Activated naive CD4-positive, alpha-beta T cell treated with anti-CD3 and anti-CD28 coated beads for 36 hours (primary cell): ENCODE measurements at regions of chr4 and their contacts with region 1.

Region 1: DNA sequence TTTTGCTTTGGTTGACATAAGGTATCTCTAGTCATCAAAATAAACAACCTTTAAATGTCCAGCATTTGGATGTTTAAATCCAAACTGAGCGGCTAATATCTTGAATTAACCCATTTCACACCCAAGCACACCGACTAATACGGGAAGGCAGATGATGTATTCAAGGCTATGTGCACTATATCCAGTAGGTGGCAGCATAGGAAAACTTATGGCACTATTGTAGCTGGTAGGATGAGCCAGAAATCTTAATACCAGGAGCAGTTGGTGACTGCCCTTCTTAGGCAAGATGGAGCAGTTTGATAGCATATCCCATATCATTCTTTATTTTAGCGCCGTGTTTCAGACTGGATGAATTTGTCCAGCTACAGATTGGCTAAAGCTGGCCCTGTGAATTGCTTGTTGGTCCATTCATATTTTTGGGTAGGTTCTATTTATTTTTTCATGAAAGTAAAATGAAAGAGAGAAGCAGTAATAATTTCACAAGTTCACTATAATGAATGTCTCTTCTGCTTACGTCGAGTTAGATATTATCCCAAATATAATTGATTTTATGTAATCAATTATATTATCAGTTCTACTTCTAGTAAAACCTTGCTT is 24.4 kb downstream of the UCHL1 start:
- DNase-seq: peak; percentile 42
- H3K4me3 Mint-ChIP-seq: no peak overlapping the region
- H3K27ac Mint-ChIP-seq: no peak overlapping the region
- H3K4me1 Mint-ChIP-seq: no peaks in the 10 kb centered on the region
- H3K27me3 Mint-ChIP-seq: peaks cover 4% of the 10 kb centered on the region

Region 2: GRCh38 chr4:41214136-41214824 is 66.9 kb before region 1 on chr4 and contains the start of gene APBB2:
- CTCF ChIA-PET with region 1: no interaction called
- intact Hi-C with region 1: no loop called
- DNase-seq: peak; percentile 66
- H3K4me3 Mint-ChIP-seq: peak within 1 kb of the TSS; percentile 79
- H3K27ac Mint-ChIP-seq: no peak within 1 kb of the TSS
- H3K4me1 Mint-ChIP-seq: peaks cover 22% of the 10 kb centered on the region
- H3K27me3 Mint-ChIP-seq: peaks cover 47% of the 10 kb centered on the region
- total RNA-seq, gene APBB2: 4.5 to 4.8 TPM

Region 3: GRCh38 chr4:41257257-41257901 is 23.8 kb before region 1 on chr4:
- CTCF ChIA-PET with region 1: interaction called, 18 read pairs
- intact Hi-C with region 1: no loop called
- DNase-seq: peak; percentile 29
- H3K4me3 Mint-ChIP-seq: peak overlapping the region; percentile 60
- H3K27ac Mint-ChIP-seq: no peak overlapping the region
- H3K4me1 Mint-ChIP-seq: peaks cover 8% of the 10 kb centered on the region
- H3K27me3 Mint-ChIP-seq: peaks cover 57% of the 10 kb centered on the region

Region 4: DNA sequence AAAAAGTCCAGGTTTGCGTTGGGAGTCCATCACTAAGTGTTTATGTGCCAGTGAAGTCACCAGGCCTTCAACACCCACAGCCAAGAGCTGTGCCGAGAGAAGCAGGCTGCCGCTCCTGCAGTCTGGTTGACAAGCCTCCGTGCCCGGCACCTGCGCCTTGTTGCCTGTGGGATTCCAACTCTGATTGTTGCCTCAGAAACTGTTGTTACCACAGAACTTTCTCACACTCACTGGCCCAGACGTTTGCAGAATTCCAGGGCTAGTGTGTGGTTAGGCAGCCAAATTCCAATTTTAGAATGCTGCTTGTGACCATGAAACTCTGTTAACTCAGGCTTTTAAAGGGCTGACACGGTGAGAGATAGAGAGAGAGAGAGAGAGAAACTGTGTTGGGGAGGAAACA is 137.3 kb after region 1 on chr4:
- CTCF ChIA-PET with region 1: no interaction called
- intact Hi-C with region 1: no loop called
- DNase-seq: no peak
- H3K4me3 Mint-ChIP-seq: no peak overlapping the region
- H3K27ac Mint-ChIP-seq: no peak overlapping the region
- H3K4me1 Mint-ChIP-seq: no peaks in the 10 kb centered on the region
- H3K27me3 Mint-ChIP-seq: no peaks in the 10 kb centered on the region

Region 5: GRCh38 chr4:41644288-41644914 is 363.3 kb after region 1 on chr4:
- CTCF ChIA-PET with region 1: interaction called, 3 read pairs
- intact Hi-C with region 1: loop called (anchors 5 kb)
- DNase-seq: peak; percentile 42
- H3K4me3 Mint-ChIP-seq: no peak overlapping the region
- H3K27ac Mint-ChIP-seq: no peak overlapping the region
- H3K4me1 Mint-ChIP-seq: no peaks in the 10 kb centered on the region
- H3K27me3 Mint-ChIP-seq: peaks cover 31% of the 10 kb centered on the region

Region 6: DNA sequence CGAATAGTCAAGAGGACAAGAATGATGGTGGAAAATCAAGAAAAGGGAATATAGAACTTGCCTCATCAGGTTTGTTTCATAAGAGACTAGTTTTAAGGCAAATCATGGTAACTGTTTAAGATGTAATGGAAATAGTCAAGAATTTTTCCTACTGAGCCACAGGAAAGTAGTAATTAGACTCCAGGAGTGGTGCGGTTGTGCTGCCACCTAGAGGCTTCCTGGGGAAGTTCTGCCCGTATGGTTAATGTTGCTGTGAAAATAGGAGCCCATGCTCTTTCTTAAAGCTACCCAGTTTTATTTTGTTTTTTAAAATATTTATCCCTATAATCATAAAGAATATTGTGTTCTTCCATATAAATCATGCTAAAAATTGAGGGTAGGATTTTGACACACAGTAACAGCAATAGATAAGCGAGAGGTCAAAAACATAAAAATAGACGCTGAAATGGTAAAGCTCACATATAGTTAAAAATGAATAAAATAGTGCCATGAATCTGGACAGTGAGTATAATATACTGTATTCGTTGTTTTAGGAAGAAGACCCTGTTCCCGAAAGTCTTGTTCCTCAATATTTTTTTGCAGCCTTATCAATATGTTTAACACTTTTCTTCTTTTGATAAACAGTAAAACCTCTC is 380.4 kb after region 1 on chr4:
- CTCF ChIA-PET with region 1: interaction called, 47 read pairs
- intact Hi-C with region 1: loop called (anchors 1 kb)
- DNase-seq: peak; percentile 66
- H3K4me3 Mint-ChIP-seq: no peak overlapping the region
- H3K27ac Mint-ChIP-seq: no peak overlapping the region
- H3K4me1 Mint-ChIP-seq: peaks cover 4% of the 10 kb centered on the region
- H3K27me3 Mint-ChIP-seq: peaks cover 2% of the 10 kb centered on the region

Region 7: GRCh38 chr4:41882625-41883347 is 601.6 kb after region 1 on chr4:
- CTCF ChIA-PET with region 1: interaction called, 8 read pairs
- intact Hi-C with region 1: loop called (anchors 2 kb)
- DNase-seq: peak; percentile 63
- H3K4me3 Mint-ChIP-seq: peak overlapping the region; percentile 39
- H3K27ac Mint-ChIP-seq: no peak overlapping the region
- H3K4me1 Mint-ChIP-seq: peaks cover 17% of the 10 kb centered on the region
- H3K27me3 Mint-ChIP-seq: peaks cover 44% of the 10 kb centered on the region

Region 8: GRCh38 chr4:41887821-41888686 is 606.9 kb after region 1 on chr4:
- CTCF ChIA-PET with region 1: interaction called, 8 read pairs
- intact Hi-C with region 1: loop called (anchors 1 kb)
- DNase-seq: peak; percentile 69
- H3K4me3 Mint-ChIP-seq: no peak overlapping the region
- H3K27ac Mint-ChIP-seq: no peak overlapping the region
- H3K4me1 Mint-ChIP-seq: no peaks in the 10 kb centered on the region
- H3K27me3 Mint-ChIP-seq: peaks cover 5% of the 10 kb centered on the region